Activated T-helper 1 cell treated with anti-CD3 and anti-CD28 coated beads, Interleukin-12 subunit alpha, Interleukin-12 subunit beta, Interleukin-2, Interleukin-4 antibody, amounts not matched to agents 30 ng/mL and 10 ng/mL and 1 ng/mL, durations not matched to agents 14 hours and 24 hours and 36 hours (primary cell): ENCODE measurements at regions of chr4 and their contacts with region 1.

Region 1: DNA sequence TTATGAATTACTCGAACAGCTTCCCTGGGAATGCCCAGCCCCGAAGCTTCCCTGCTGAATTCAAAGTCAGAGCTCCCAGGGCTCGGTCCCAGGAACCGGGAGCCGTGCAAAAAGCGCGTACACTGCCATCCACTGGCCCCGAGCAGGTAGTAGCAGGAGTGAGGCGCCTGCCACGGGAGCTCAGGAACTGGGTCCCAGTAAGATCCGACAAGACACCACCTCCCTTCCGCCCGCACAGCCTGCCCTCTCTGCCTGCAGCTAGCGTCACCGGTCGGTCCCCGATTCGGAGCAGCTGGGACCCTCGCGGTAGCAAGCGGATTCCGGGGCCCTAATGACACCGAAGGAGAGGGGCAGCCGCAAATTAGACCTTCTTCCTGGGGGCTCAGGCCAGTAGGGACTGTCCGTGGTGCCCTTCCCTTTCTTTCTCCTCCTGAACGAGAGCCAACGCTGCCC is 1.2 kb downstream of the CORIN start:
- DNase-seq: peak; percentile 29
- H3K4me3 Mint-ChIP-seq: peak overlapping the region; percentile 80
- H3K27ac Mint-ChIP-seq: no peak overlapping the region
- H3K4me1 Mint-ChIP-seq: peaks cover 28% of the 10 kb centered on the region
- H3K27me3 Mint-ChIP-seq: peaks cover 47% of the 10 kb centered on the region

Region 2: GRCh38 chr4:47485047-47485692 is 351.5 kb before region 1 on chr4 and contains the start of gene ATP10D:
- intact Hi-C with region 1: no loop called
- DNase-seq: peak; percentile 72
- H3K4me3 Mint-ChIP-seq: peak within 1 kb of the TSS; percentile 92
- H3K27ac Mint-ChIP-seq: peak within 1 kb of the TSS; percentile 51
- H3K4me1 Mint-ChIP-seq: peaks cover 27% of the 10 kb centered on the region
- H3K27me3 Mint-ChIP-seq: peaks cover 9% of the 10 kb centered on the region
- total RNA-seq, gene ATP10D: 1.6 and 1.9 TPM in 2 replicates

Region 3: DNA sequence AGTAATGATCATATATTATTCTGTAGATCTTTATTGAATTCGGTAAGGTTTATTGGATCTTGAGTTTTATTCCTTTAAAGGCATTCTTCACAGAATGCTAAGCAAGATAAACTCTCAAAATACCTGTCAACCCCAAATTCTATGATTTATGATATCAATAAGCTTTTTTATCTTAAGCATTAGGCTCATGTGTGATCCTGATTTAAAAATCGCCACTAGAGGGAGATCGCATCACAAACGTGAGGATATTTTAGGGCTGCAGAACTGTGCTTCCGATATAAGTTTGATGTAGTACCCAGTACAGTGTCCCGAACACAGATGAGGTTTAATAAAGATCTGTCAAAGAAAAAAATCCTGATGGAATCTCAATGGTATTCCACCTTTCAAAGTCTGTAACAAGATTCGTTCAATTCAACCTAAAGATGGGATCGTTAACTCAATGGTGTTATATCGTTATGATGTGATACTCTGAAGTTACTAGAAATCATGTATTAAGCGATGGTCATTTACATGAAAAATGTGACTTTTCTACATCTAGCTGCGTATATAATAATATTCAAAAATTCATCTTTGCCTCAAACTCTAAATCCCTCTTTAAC is 167.8 kb before region 1 on chr4:
- intact Hi-C with region 1: loop called (anchors 5 kb)
- DNase-seq: no peak
- H3K4me3 Mint-ChIP-seq: no peak overlapping the region
- H3K27ac Mint-ChIP-seq: no peak overlapping the region
- H3K4me1 Mint-ChIP-seq: no peaks in the 10 kb centered on the region
- H3K27me3 Mint-ChIP-seq: peaks cover 14% of the 10 kb centered on the region

Region 4: DNA sequence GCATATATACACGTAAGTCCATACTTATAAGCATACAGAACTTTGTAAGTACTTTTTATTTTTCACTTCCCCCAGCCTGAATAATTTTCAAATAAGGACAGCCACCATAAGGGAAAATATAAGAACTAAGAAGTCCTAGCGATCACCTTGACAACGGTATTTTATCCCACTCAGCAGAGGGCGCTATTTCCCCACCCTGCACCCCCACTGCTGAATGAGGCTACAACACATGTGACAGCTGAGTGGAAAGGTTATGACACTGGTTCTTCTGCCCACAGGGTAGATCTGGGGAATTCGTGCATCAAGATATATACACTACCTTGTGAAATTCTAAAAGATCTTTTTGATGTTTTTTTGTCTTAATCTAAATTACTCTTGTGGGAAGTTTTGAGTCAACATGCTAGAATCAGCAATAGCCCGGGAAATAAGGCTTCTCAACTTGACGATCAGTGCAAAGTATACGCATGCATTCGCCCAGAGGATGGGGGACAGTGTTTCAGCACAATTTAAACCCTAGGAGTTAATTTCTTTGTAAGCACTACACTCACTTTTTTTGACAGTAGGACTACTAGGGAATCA is 150.3 kb before region 1 on chr4:
- intact Hi-C with region 1: loop called (anchors 1 kb)
- DNase-seq: peak; percentile 29
- H3K4me3 Mint-ChIP-seq: no peak overlapping the region
- H3K27ac Mint-ChIP-seq: no peak overlapping the region
- H3K4me1 Mint-ChIP-seq: no peaks in the 10 kb centered on the region
- H3K27me3 Mint-ChIP-seq: peaks cover 8% of the 10 kb centered on the region

Region 5: GRCh38 chr4:47704693-47705325 is 131.9 kb before region 1 on chr4:
- intact Hi-C with region 1: loop called (anchors 2 kb)
- DNase-seq: no peak
- H3K4me3 Mint-ChIP-seq: no peak overlapping the region
- H3K27ac Mint-ChIP-seq: no peak overlapping the region
- H3K4me1 Mint-ChIP-seq: no peaks in the 10 kb centered on the region
- H3K27me3 Mint-ChIP-seq: peaks cover 28% of the 10 kb centered on the region

Region 6: DNA sequence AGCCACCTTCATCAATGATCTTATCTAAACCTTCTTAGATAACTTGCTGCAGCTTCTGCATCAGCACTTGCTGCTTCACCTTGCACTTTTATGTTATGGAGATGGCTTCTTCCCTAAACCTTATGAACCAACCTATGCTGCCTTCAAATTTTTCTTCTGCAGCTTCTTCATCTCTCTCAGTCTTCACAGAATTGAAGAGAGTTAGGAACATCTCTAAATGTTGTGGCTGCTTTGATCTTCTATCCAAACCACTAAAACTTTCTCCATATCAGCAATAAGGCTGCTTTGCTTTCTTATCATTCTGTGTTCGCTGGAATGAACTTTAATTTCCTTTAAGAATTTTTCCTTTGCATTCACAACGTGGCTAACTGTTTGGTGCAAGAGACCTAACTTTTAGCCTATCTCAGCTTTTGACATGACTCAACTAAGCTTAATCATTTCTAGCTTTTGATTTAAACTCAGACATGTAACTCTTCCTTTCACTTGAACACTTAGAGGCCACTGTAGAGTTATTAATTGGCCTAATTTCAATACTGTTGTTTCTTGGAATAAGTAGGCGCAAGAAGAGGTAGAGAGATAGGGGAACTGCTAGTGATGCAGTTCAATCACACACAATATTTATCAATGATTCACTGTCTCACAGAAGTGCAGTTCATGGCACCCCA is 37.3 kb after region 1 on chr4:
- intact Hi-C with region 1: loop called (anchors 1 kb)
- DNase-seq: no peak
- H3K4me3 Mint-ChIP-seq: no peak overlapping the region
- H3K27ac Mint-ChIP-seq: no peak overlapping the region
- H3K4me1 Mint-ChIP-seq: peaks cover 8% of the 10 kb centered on the region
- H3K27me3 Mint-ChIP-seq: no peaks in the 10 kb centered on the region

Region 7: GRCh38 chr4:47933840-47934239 is 97.2 kb after region 1 on chr4:
- intact Hi-C with region 1: loop called (anchors 2 kb)
- DNase-seq: no peak
- H3K4me3 Mint-ChIP-seq: no peak overlapping the region
- H3K27ac Mint-ChIP-seq: no peak overlapping the region
- H3K4me1 Mint-ChIP-seq: no peaks in the 10 kb centered on the region
- H3K27me3 Mint-ChIP-seq: peaks cover 6% of the 10 kb centered on the region